ENCODE measurements at regions of chr6 and their contacts with region 1.

Region 1: GRCh38 chr6:13336553-13336952 is 8.2 kb upstream of the TBC1D7 start:
- DNase-seq: peak; percentile 84
- ATAC-seq: peak; percentile 81
- H3K4me3 ChIP-seq: no peak overlapping the region
- H3K4me3 Mint-ChIP-seq: no peak overlapping the region
- H3K27ac ChIP-seq: no peak overlapping the region
- H3K27ac Mint-ChIP-seq: peak overlapping the region; percentile 5
- H3K4me1 ChIP-seq: peaks cover 40% of the 10 kb centered on the region in 2 donors
- H3K4me1 Mint-ChIP-seq: peaks cover 46% of the 10 kb centered on the region
- H3K27me3 ChIP-seq: no peaks in the 10 kb centered on the region
- H3K27me3 Mint-ChIP-seq: no peaks in the 10 kb centered on the region
- CTCF ChIP-seq: peak; percentile 90

Region 2: GRCh38 chr6:13194852-13195251 is 141.7 kb before region 1 on chr6:
- CTCF ChIA-PET with region 1: interaction called, 238 read pairs
- POLR2A ChIA-PET with region 1: no interaction called
- intact Hi-C with region 1: loop called (anchors 1 kb)
- DNase-seq: peak; percentile 80
- ATAC-seq: peak; percentile 70
- H3K4me3 ChIP-seq: no peak overlapping the region
- H3K4me3 Mint-ChIP-seq: no peak overlapping the region
- H3K27ac ChIP-seq: no peak overlapping the region
- H3K27ac Mint-ChIP-seq: peak overlapping the region; percentile 70
- H3K4me1 ChIP-seq: peaks cover 7 to 14% of the 10 kb centered on the region in 2 donors
- H3K4me1 Mint-ChIP-seq: peaks cover 13% of the 10 kb centered on the region
- H3K27me3 ChIP-seq: no peaks in the 10 kb centered on the region
- H3K27me3 Mint-ChIP-seq: peaks cover 13% of the 10 kb centered on the region
- CTCF ChIP-seq: peak; percentile 73

Region 3: DNA sequence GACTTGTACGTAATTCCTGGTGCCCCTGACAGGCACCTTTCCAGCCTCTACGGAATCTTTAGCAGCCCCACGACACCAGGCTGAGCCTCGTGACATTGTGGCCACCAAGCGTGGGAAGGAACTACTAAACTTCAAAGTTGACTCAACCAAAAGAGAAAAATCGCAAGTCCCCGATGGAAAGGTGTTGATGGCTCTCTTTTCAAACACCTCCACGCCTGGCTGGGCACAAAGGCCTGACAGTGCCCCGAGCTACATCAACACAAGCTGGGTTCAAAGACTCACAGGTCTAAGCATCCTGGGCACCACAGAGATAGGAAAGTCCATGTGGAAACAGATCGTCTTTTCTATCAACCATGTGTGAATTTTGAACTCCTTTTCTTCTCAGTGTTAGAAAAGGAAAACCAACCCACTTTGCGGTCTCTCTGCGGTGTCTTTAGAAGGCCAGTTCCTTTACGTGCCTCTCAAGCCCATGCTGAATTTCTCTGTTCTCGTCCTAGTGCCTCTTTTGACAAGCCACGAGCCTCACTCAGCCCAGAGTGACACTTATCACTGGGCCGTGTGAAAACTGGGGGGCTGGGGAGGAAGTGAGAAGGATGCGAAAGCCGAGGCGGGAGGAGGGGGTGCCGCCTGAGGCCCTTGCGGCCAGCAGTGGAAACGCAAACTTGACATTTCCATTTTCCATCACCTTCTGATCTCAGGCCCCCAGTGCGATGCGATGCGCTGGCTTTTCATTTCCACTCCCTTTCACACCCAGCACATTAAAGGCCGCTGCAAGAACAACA is 91.4 kb after region 1 on chr6:
- CTCF ChIA-PET with region 1: interaction called, 6 read pairs
- POLR2A ChIA-PET with region 1: no interaction called
- intact Hi-C with region 1: loop called (anchors 2 kb)
- DNase-seq: peak; percentile 91
- ATAC-seq: peak; percentile 85
- H3K4me3 ChIP-seq: peak overlapping the region in 4 of 5 experiments; percentile 7 to 46 (median 26)
- H3K4me3 Mint-ChIP-seq: peak overlapping the region; percentile 82
- H3K27ac ChIP-seq: peak overlapping the region; percentile 83 to 86
- H3K27ac Mint-ChIP-seq: peak overlapping the region; percentile 95
- H3K4me1 ChIP-seq: peaks cover 41 to 75% of the 10 kb centered on the region in 2 donors
- H3K4me1 Mint-ChIP-seq: peaks cover 67% of the 10 kb centered on the region
- H3K27me3 ChIP-seq: no peaks in the 10 kb centered on the region
- H3K27me3 Mint-ChIP-seq: no peaks in the 10 kb centered on the region
- CTCF ChIP-seq: peak; percentile 66

Region 4: GRCh38 chr6:13526727-13527670 is 190.4 kb after region 1 on chr6:
- CTCF ChIA-PET with region 1: interaction called, 6 read pairs
- POLR2A ChIA-PET with region 1: no interaction called
- intact Hi-C with region 1: loop called (anchors 1 kb)
- DNase-seq: peak; percentile 86
- ATAC-seq: peak; percentile 88
- H3K4me3 ChIP-seq: peak overlapping the region in 3 of 5 experiments; percentile 0 to 33 (median 11)
- H3K4me3 Mint-ChIP-seq: peak overlapping the region; percentile 40
- H3K27ac ChIP-seq: peak overlapping the region; percentile 76 to 89
- H3K27ac Mint-ChIP-seq: peak overlapping the region; percentile 88
- H3K4me1 ChIP-seq: peaks cover 38 to 41% of the 10 kb centered on the region in 2 donors
- H3K4me1 Mint-ChIP-seq: peaks cover 47% of the 10 kb centered on the region
- H3K27me3 ChIP-seq: no peaks in the 10 kb centered on the region
- H3K27me3 Mint-ChIP-seq: no peaks in the 10 kb centered on the region
- CTCF ChIP-seq: peak; percentile 33

Region 5: DNA sequence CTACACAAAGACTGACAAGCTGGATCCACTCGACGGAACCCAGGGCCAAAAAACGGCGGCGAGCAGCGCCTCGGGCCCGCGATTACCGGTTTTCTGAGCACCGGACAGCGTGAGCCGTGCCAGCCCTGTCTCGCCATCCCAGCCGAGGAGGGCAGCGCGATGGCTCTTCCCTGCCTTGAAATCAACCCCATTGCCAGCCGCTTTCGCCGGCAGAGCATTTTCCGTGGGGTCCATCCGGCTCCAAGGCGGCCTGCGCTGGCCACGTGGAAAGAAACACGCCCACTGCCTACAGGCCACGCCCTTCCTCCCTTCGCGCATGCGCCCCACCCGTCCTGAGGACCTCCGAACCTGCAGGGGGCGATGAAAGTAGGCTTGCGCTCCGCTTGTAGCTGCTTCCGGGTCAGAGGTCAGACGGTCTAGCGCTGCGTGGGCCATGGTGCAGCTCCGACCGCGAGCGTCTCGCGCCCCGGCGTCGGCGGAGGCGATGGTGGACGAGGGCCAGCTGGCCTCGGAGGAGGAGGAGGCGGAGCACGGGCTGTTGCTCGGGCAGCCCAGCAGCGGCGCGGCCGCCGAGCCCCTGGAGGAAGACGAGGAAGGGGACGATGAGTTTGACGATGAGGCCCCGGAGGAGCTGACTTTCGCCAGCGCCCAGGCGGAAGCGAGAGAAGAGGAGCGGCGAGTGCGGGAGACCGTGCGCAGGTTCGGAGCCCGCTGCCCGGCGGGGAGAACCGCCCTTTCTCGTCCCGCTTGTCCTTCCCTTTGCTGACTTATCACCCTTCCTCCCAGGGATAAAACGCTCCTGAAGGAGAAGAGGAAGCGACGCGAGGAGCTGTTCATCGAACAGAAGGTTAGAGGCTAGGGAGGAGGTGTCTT is 278.6 kb after region 1 on chr6 and contains the start of gene NOL7:
- CTCF ChIA-PET with region 1: interaction called, 14 read pairs
- POLR2A ChIA-PET with region 1: interaction called, 11 read pairs
- intact Hi-C with region 1: no loop called
- DNase-seq: peak; percentile 99
- ATAC-seq: peak; percentile 93
- H3K4me3 ChIP-seq: peak within 1 kb of the TSS; percentile 79 to 94 (median 93)
- H3K4me3 Mint-ChIP-seq: peak within 1 kb of the TSS; percentile 97
- H3K27ac ChIP-seq: peak within 1 kb of the TSS; percentile 73 to 82
- H3K27ac Mint-ChIP-seq: peak within 1 kb of the TSS; percentile 97
- H3K4me1 ChIP-seq: peaks cover 16 to 22% of the 10 kb centered on the region in 2 donors
- H3K4me1 Mint-ChIP-seq: peaks cover 46% of the 10 kb centered on the region
- H3K27me3 ChIP-seq: no peaks in the 10 kb centered on the region
- H3K27me3 Mint-ChIP-seq: no peaks in the 10 kb centered on the region
- CTCF ChIP-seq: peak; percentile 86
- total RNA-seq, gene NOL7: 48.6 and 58.3 TPM in 2 replicates

Measured in B cell (primary cell).